Mammary epithelial cell (primary cell): ENCODE measurements at regions of chr1 and their contacts with region 1.

Region 1: GRCh38 chr1:11719313-11720032 is 16.5 kb upstream of the AGTRAP start:
- DNase-seq: no peak
- H3K4me3 ChIP-seq: peak overlapping the region in 2 of 3 experiments; percentile 33 to 43
- H3K27ac ChIP-seq: no peak overlapping the region
- H3K4me1 ChIP-seq: peaks cover 6% of the 10 kb centered on the region
- H3K27me3 ChIP-seq: no peaks in the 10 kb centered on the region
- CTCF ChIP-seq: peak; percentile 88 to 97

Region 2: DNA sequence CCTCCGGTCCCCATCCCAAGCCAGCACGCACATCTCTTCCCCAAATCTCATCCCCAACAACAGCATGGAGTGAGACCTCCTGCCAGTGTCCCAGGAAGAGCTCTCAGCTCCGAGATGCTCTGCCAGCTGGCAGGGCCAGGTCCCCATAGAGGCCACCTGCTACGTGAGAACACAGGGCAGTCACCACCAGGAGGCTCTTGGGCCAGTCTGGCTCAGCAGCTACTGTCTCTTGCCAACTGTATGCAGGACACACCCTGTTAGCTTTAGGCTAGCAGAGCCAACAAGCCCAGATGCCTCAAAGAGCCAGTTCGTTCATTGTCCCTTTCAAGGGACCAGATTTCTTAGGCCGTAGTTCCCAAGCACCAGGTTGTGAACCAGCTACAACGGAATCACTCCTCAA is 102.2 kb before region 1 on chr1:
- CTCF ChIA-PET with region 1: no interaction called
- dilution Hi-C with region 1: loop called (anchors 5 kb)
- in situ Hi-C with region 1: no loop called
- intact Hi-C with region 1: no loop called
- DNase-seq: no peak
- H3K4me3 ChIP-seq: no peak overlapping the region
- H3K27ac ChIP-seq: no peak overlapping the region
- H3K4me1 ChIP-seq: no peaks in the 10 kb centered on the region
- H3K27me3 ChIP-seq: no peaks in the 10 kb centered on the region
- CTCF ChIP-seq: peak in 1 of 2 donors; percentile 11

Region 3: GRCh38 chr1:11658308-11658941 is 61.0 kb before region 1 on chr1:
- CTCF ChIA-PET with region 1: no interaction called
- dilution Hi-C with region 1: loop called (anchors 5 kb)
- in situ Hi-C with region 1: loop called (anchors 10 kb)
- intact Hi-C with region 1: no loop called
- DNase-seq: no peak
- H3K4me3 ChIP-seq: no peak overlapping the region
- H3K27ac ChIP-seq: no peak overlapping the region
- H3K4me1 ChIP-seq: peaks cover 14% of the 10 kb centered on the region
- H3K27me3 ChIP-seq: no peaks in the 10 kb centered on the region
- CTCF ChIP-seq: no peak

Region 4: DNA sequence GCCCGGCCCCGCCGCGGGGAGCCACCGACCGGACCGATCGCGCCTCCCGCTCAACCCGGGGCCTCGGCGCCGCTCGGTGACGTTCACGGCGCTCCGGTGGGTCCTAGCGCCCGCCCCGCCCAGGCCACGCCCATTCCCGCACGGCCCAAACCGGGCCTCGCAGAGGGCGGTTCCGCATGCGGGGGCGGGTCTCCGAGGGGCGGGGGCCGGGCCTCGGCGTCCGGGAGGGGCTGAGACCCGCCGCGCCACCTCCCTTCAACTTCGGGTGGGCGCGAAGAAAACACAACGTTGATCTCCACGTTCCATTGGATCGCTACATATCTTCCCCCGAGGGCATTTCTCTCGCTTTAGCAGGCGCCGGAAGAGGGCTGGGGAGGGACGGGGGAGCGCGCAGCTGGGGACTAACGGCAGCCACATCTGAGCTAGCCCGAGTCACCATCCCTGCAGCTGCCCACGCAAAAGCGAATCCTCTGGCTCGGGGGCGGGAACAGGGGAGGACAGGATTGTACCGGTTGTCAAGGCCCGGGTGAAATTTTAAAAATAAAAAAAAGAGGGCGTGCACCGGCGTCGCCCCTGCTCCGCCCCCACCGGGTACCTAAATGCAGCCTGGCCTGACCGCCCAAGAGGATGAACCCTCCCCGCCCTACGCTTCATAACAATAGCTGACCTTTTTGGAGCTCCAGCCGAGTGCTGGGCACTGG is 38.3 kb before region 1 on chr1 and contains the start of gene MAD2L2:
- CTCF ChIA-PET with region 1: no interaction called
- dilution Hi-C with region 1: no loop called
- in situ Hi-C with region 1: no loop called
- intact Hi-C with region 1: loop called (anchors 1 kb)
- DNase-seq: peak; percentile 79
- H3K4me3 ChIP-seq: peak within 1 kb of the TSS; percentile 87 to 99 (median 89)
- H3K27ac ChIP-seq: peak within 1 kb of the TSS; percentile 35
- H3K4me1 ChIP-seq: peaks cover 11% of the 10 kb centered on the region
- H3K27me3 ChIP-seq: no peaks in the 10 kb centered on the region
- CTCF ChIP-seq: no peak
- total RNA-seq, gene MAD2L2: 44.5 to 45.9 TPM

Region 5: DNA sequence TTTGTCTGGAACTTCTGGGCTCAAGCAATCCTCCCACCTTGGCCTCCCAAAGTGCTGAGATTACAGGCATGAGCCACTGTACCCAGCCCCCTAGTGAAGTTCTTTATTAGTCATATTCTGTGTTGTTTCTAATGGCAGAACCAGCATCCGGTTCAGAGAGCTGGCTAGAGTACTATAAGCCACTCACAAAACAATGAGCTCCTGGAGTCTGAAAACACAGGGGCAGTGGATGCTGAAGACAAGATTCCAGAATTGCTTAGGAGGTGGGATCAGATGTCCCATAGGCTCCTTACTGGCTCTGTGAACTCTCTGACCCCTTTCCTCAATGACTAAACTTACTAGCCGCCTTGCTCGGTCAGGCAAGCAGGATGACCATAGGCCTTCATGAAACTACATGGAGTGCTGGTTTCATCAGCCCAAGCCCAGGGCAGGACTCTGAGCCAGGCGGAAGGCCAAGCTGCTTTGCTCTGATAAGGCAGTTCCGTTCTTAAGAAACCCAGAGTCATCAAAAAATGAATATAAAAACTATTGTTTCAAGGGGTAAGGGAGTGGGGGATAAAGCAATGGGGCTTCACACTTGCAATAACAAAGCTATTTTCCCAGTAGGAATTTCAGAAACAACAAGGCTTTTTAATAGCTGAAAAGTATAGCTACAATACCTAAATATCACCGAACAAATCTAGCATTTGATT is 78.2 kb after region 1 on chr1:
- CTCF ChIA-PET with region 1: no interaction called
- dilution Hi-C with region 1: loop called (anchors 5 kb)
- in situ Hi-C with region 1: no loop called
- intact Hi-C with region 1: no loop called
- DNase-seq: no peak
- H3K4me3 ChIP-seq: no peak overlapping the region
- H3K27ac ChIP-seq: no peak overlapping the region
- H3K4me1 ChIP-seq: peaks cover 6% of the 10 kb centered on the region
- H3K27me3 ChIP-seq: no peaks in the 10 kb centered on the region
- CTCF ChIP-seq: no peak

Region 6: GRCh38 chr1:12031039-12031980 is 311.8 kb after region 1 on chr1:
- CTCF ChIA-PET with region 1: no interaction called
- dilution Hi-C with region 1: no loop called
- in situ Hi-C with region 1: no loop called
- intact Hi-C with region 1: no loop called
- DNase-seq: peak; percentile 12
- H3K4me3 ChIP-seq: no peak overlapping the region
- H3K27ac ChIP-seq: no peak overlapping the region
- H3K4me1 ChIP-seq: no peaks in the 10 kb centered on the region
- H3K27me3 ChIP-seq: no peaks in the 10 kb centered on the region
- CTCF ChIP-seq: peak; percentile 32 to 52